Mammary epithelial cell (primary cell): ENCODE measurements at regions of chr2 and their contacts with region 1.

Region 1: GRCh38 chr2:212005085-212005671 is 533.4 kb downstream of the ERBB4 start:
- DNase-seq: peak; percentile 20
- H3K4me3 ChIP-seq: no peak overlapping the region
- H3K27ac ChIP-seq: no peak overlapping the region
- H3K4me1 ChIP-seq: no peaks in the 10 kb centered on the region
- H3K27me3 ChIP-seq: no peaks in the 10 kb centered on the region
- CTCF ChIP-seq: peak; percentile 54 to 73

Region 2: DNA sequence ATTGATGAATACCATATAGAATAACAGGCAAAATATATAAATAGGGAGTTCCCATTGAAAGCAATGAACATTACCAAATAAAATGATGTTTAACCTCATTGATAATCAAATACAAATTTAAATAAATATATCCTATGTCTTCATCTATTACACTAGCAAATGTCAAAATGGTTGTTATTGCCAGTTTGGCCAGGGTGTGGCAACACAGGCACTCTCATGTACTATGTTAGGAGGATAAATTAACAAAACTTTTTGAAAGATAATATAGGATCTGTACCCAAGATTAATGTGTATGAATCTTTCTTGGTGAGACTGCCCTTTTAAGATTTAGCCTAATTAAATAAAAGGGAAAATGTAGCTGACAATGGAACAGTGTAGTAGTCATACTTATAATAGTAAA is 125.9 kb before region 1 on chr2:
- CTCF ChIA-PET with region 1: no interaction called
- dilution Hi-C with region 1: no loop called
- in situ Hi-C with region 1: no loop called
- intact Hi-C with region 1: loop called (anchors 5 kb)
- DNase-seq: no peak
- H3K4me3 ChIP-seq: no peak overlapping the region
- H3K27ac ChIP-seq: no peak overlapping the region
- H3K4me1 ChIP-seq: no peaks in the 10 kb centered on the region
- H3K27me3 ChIP-seq: no peaks in the 10 kb centered on the region
- CTCF ChIP-seq: peak; percentile 27 to 54

Region 3: GRCh38 chr2:212536817-212537725 is 531.9 kb after region 1 on chr2:
- CTCF ChIA-PET with region 1: no interaction called
- dilution Hi-C with region 1: no loop called
- in situ Hi-C with region 1: no loop called
- intact Hi-C with region 1: loop called (anchors 10 kb)
- DNase-seq: no peak
- H3K4me3 ChIP-seq: peak overlapping the region; percentile 26 to 54 (median 30)
- H3K27ac ChIP-seq: no peak overlapping the region
- H3K4me1 ChIP-seq: peaks cover 18% of the 10 kb centered on the region
- H3K27me3 ChIP-seq: peaks cover 35% of the 10 kb centered on the region
- CTCF ChIP-seq: no peak